HEK293T (cell line): ENCODE measurements at regions of chr13 and their contacts with region 1.

Region 1: GRCh38 chr13:43804461-43805070 is 17.8 kb upstream of the ENOX1 start:
- DNase-seq: no peak

Region 2: GRCh38 chr13:43815204-43815603 is 10.6 kb after region 1 on chr13:
- CTCF ChIA-PET with region 1: interaction called, 11 read pairs
- POLR2A ChIA-PET with region 1: no interaction called
- DNase-seq: peak; percentile 56